MCF 10A (cell line): ENCODE measurements at regions of chr1 and their contacts with region 1.

Region 1: DNA sequence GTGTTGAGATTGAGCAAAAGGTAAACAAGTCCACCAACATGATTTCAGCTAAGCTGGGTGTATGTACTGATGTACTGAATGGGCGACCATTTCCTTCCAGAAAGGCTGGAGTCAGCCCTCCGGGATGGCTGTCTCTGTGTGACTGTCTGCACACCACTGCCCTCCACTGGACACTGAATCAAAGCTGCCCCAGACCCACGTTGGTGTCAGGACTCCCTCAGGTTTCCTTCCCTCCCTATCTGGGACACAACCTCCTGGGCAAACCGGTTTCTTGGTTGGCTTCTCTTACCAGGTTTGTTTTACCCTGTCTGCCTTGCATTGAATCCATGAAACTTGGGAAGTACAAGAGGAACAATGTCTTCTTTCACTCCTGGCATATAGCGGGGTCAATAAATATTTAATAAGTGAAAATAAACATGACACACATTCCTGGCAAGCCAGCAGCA is 5.3 kb upstream of the SRP9 start:
- DNase-seq: peak; percentile 97
- H3K4me3 Mint-ChIP-seq: no peak overlapping the region
- H3K27ac Mint-ChIP-seq: no peak overlapping the region
- H3K4me1 Mint-ChIP-seq: peaks cover 19% of the 10 kb centered on the region
- H3K27me3 Mint-ChIP-seq: no peaks in the 10 kb centered on the region
- CTCF ChIP-seq: peak; percentile 100

Region 2: GRCh38 chr1:225508538-225509375 is 263.6 kb before region 1 on chr1:
- CTCF ChIA-PET with region 1: interaction called, 45 read pairs
- POLR2A ChIA-PET with region 1: interaction called, 49 read pairs
- intact Hi-C with region 1: loop called (anchors 1 kb)
- DNase-seq: peak; percentile 99
- H3K4me3 Mint-ChIP-seq: no peak overlapping the region
- H3K27ac Mint-ChIP-seq: peak overlapping the region; percentile 83
- H3K4me1 Mint-ChIP-seq: peaks cover 32% of the 10 kb centered on the region
- H3K27me3 Mint-ChIP-seq: no peaks in the 10 kb centered on the region
- CTCF ChIP-seq: no peak

Region 3: DNA sequence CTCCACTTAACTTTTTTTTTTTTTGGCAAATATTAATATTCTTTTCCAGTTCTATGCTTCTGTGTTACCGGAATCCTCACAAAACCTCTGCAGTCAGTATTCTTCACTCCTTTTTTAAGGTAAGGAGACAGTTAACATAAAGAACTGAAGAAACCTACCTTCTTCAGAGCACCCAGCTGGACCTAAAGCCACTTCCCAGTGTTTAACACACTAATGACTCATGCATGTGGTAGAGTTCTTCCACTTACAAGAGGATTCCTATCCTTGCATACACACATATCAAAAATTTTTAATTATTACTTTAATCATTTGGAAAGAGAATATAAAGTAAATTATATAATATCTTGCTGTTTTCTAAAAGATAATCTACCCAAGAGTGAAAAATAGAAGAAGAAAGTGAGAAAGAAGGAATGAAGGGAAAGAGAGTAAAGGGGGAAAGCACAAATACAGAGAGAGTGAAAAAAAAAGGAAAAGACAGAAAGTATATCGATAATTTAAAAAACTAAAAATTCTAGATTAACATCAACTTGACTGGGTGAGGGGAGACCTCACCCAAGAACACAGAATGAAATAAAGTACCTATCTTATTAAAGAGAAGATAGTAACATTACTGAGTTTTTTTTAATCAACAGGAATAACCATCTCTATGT is 174.3 kb before region 1 on chr1:
- CTCF ChIA-PET with region 1: interaction called, 11 read pairs
- POLR2A ChIA-PET with region 1: interaction called, 31 read pairs
- intact Hi-C with region 1: no loop called
- DNase-seq: peak; percentile 59
- H3K4me3 Mint-ChIP-seq: no peak overlapping the region
- H3K27ac Mint-ChIP-seq: peak overlapping the region; percentile 25
- H3K4me1 Mint-ChIP-seq: peaks cover 38% of the 10 kb centered on the region
- H3K27me3 Mint-ChIP-seq: no peaks in the 10 kb centered on the region
- CTCF ChIP-seq: no peak

Region 4: DNA sequence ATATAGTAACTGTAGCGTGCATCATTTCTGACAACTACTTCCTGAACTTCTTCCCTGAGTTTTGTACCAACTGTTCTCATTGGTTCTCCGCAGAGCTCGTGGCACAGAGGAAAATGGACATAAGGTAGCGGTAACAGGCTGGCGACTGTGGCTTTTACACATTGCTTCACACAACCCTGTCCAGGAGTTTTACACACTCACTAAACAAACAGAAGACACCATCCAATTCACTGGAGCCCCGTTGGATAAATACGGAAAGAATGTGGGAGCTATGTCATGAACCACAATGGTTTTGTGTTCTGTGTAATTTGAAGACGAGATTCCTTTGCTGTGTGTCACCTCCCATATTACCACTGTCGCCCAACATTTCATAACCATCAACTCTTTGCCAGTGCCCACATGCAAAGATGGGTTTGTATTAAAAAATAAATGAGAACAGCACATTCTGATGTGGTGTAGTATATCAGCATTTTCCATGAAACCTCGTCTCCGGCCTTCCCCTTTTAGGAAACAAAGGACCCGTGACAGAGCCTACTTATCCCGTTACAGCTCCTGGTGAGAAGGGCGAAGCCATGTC is 72.1 kb before region 1 on chr1:
- CTCF ChIA-PET with region 1: interaction called, 50 read pairs
- POLR2A ChIA-PET with region 1: interaction called, 28 read pairs
- intact Hi-C with region 1: loop called (anchors 5 kb)
- DNase-seq: peak; percentile 100
- H3K4me3 Mint-ChIP-seq: peak overlapping the region; percentile 68
- H3K27ac Mint-ChIP-seq: peak overlapping the region; percentile 94
- H3K4me1 Mint-ChIP-seq: peaks cover 26% of the 10 kb centered on the region
- H3K27me3 Mint-ChIP-seq: no peaks in the 10 kb centered on the region
- CTCF ChIP-seq: no peak

Region 5: DNA sequence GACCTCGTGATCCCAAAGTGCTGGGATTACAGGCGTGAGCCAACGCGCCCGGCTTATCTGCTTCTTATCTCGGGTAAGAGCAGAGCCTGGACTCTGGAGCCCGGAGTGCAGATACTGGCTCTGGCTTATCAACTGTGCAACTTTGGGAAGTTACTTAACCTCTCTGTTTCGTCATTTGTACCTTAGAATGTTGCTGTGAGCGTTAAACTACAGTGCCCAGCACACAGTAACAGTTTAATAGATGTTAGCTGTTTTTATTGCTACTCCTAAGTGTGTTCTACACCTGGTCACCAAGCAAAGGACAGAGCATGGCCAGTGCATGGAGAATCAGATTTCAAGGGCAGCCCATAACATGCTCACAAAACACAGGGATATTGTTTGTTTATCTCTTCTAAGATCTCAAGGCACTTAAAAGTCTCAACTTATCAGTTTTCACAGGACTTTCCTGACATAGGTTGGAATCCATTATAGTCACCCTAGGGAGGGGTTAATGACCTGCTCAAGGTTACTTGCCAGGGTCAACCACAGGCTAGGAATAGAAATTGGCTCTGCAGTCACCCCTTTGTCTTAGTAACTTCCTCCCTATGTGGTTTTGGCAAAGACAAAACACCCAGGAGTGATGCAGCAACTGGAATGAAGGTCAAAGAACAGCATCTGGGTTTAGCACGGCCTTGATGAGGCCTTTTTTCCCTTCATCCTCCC is 17.3 kb before region 1 on chr1:
- CTCF ChIA-PET with region 1: interaction called, 27 read pairs
- POLR2A ChIA-PET with region 1: interaction called, 82 read pairs
- intact Hi-C with region 1: no loop called
- DNase-seq: peak; percentile 93
- H3K4me3 Mint-ChIP-seq: no peak overlapping the region
- H3K27ac Mint-ChIP-seq: no peak overlapping the region
- H3K4me1 Mint-ChIP-seq: peaks cover 19% of the 10 kb centered on the region
- H3K27me3 Mint-ChIP-seq: no peaks in the 10 kb centered on the region
- CTCF ChIP-seq: no peak

Region 6: DNA sequence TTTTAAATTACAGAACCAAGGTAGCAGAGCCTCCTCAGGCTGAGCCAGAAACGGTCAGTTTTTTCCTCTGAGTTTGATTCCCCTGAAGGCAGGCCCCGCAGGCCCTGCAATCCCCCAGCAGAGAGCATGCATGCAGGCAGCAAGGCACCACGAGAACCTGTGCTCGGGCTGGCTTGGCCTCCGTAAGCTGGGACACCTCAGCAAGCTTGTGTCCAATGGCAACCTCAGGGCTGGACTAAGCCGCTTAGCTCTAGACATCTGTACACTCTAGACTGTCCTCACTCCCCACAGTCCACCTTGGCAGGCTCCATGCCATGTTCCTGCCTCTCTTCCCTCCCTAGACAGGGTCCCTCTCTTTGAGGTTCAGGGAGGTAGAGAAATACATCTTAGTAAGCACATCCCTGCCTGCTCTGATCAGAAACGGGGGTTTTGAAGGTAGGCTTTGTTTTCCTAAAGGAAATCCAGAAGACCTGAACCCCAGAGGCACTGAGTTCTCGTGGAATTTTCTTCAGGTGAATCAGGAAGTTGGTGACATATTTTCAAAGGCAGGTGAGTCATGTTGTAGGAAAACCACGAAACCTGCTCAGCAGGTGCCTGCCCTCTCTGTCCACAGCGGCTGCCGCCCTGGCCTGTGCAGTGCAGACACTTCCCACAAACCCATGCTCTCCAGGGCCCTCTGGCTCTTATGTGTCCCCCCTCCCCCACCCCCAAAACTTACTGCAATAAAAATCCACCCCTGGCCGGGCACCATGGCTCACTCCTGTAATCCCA is 102.9 kb after region 1 on chr1:
- CTCF ChIA-PET with region 1: interaction called, 10 read pairs
- POLR2A ChIA-PET with region 1: interaction called, 70 read pairs
- intact Hi-C with region 1: no loop called
- DNase-seq: peak; percentile 75
- H3K4me3 Mint-ChIP-seq: no peak overlapping the region
- H3K27ac Mint-ChIP-seq: peak overlapping the region; percentile 62
- H3K4me1 Mint-ChIP-seq: peaks cover 38% of the 10 kb centered on the region
- H3K27me3 Mint-ChIP-seq: no peaks in the 10 kb centered on the region
- CTCF ChIP-seq: no peak